ENCODE measurements at regions of chr9 and their contacts with region 1.

Region 1: GRCh38 chr9:105694190-105694847 is at the start of gene TMEM38B:
- DNase-seq: peak; percentile 72 to 91 (median 85)
- ATAC-seq: peak; percentile 92
- H3K4me3 ChIP-seq: peak within 1 kb of the TSS; percentile 79
- H3K4me3 Mint-ChIP-seq: peak within 1 kb of the TSS; percentile 80 to 97 (median 90)
- H3K27ac ChIP-seq: peak within 1 kb of the TSS; percentile 64
- H3K27ac Mint-ChIP-seq: peak within 1 kb of the TSS; percentile 44 to 88 (median 70)
- H3K4me1 ChIP-seq: peaks cover 7 to 10% of the 10 kb centered on the region in 2 donors
- H3K4me1 Mint-ChIP-seq: peaks cover 13 to 49% (median 40%) of the 10 kb centered on the region in 7 donors
- H3K27me3 ChIP-seq: peaks cover 0 to 3% of the 10 kb centered on the region in 2 donors
- H3K27me3 Mint-ChIP-seq: peaks cover 13 to 31% (median 26%) of the 10 kb centered on the region in 5 donors
- total RNA-seq, gene TMEM38B: 5.8 to 21.0 (median 15.2) TPM

Region 2: DNA sequence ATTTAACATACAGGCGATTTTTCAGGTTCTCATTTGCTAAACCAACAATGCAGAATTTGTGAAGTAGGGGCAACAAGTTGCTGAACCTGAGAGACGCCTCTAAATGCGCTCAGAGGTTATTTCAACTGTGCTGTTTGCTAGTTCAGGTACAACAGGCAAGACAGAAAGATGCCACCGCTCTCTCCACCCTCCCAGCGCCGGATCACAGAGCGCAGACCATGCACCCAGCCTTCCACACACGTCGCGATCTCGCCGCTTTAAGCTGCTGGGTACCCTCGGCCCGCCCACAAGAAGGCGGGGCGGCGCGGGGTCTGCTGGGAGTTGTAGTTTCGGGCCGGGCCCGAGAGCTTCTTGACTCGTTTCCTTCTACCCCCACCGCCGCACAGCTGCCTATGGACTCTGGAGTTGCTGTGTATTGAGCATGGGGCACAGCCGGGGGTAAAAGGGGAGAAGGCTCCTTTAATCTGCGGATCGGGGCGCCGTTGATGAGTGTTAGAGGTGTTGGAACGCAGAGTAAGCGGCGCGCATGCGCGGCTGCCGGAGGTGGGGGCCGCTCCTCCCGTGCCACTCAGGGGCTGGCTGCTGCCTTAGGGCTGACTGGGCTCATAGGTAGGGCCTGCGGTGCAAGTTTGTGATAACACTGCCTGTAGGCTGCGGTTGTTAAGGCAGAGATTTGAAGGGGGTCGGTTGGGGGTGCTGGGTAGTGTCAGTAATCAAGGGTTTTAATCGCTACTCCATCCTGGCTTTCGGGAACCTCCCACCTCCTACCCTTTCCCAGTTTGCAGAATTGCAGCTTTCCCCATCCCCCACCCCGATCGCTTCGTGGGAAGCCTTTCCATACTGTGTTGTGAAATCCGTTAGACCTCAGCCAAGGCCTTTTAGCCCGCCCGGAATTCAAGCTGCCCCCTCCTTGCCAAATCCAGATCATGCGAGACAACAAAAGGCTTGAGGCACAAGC is 726.0 kb before region 1 on chr9:
- CTCF ChIA-PET with region 1: no interaction called
- POLR2A ChIA-PET with region 1: no interaction called
- intact Hi-C with region 1: loop called (anchors 5 to 10 kb)
- DNase-seq: peak; percentile 80 to 95 (median 91)
- ATAC-seq: peak; percentile 99
- H3K4me3 ChIP-seq: peak overlapping the region; percentile 85
- H3K4me3 Mint-ChIP-seq: peak overlapping the region; percentile 82 to 96 (median 94)
- H3K27ac ChIP-seq: peak overlapping the region; percentile 69
- H3K27ac Mint-ChIP-seq: peak overlapping the region; percentile 64 to 92 (median 86)
- H3K4me1 ChIP-seq: peaks cover 0 to 6% of the 10 kb centered on the region in 2 donors
- H3K4me1 Mint-ChIP-seq: peaks cover 12 to 25% (median 17%) of the 10 kb centered on the region in 7 donors
- H3K27me3 ChIP-seq: peaks cover 0 to 4% of the 10 kb centered on the region in 2 donors
- H3K27me3 Mint-ChIP-seq: peaks cover 0 to 30% (median 0%) of the 10 kb centered on the region in 5 donors

Region 3: DNA sequence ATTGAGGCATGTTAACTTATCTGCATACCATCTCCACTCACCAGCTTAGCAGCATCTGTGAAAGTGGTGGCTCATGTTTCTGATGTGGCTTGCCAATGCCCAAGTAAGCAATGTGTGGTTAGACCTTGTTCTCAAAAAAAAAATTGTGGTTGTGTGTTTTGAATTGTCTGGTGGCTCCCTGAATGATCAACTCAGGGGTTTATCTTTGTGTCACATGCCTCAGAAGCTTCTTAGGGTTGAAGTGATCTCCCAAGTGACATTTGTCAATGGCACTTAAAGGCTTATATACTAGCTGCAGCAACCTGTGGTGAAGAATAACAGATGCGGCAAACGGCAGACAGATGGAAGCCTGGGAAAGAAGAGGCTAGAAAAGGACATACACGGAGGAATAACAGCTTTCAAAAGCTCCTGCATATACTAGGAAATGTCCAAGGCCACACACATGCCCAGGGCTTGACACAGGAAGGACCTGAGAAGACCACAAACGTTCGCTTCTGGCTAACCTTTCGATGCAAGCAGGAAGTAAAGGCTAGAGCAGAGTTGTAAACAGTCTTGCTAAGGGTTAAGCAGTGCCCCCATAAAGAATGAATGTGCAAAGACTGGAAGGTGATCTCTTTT is 288.7 kb before region 1 on chr9:
- CTCF ChIA-PET with region 1: no interaction called
- POLR2A ChIA-PET with region 1: no interaction called
- intact Hi-C with region 1: loop called in 1 of 2 experiments (anchors 10 kb)
- DNase-seq: peak in 8 of 9 donors; percentile 61 to 92 (median 90)
- ATAC-seq: peak; percentile 94
- H3K4me3 ChIP-seq: peak overlapping the region; percentile 1
- H3K4me3 Mint-ChIP-seq: peak overlapping the region in 9 of 10 donors; percentile 63 to 84 (median 75)
- H3K27ac ChIP-seq: no peak overlapping the region
- H3K27ac Mint-ChIP-seq: peak overlapping the region in 8 of 9 donors; percentile 11 to 96 (median 90)
- H3K4me1 ChIP-seq: peaks cover 19 to 22% of the 10 kb centered on the region in 2 donors
- H3K4me1 Mint-ChIP-seq: peaks cover 20 to 42% (median 34%) of the 10 kb centered on the region in 7 donors
- H3K27me3 ChIP-seq: peaks cover 0 to 6% of the 10 kb centered on the region in 2 donors
- H3K27me3 Mint-ChIP-seq: peaks cover 34 to 82% (median 59%) of the 10 kb centered on the region in 5 donors

Region 4: GRCh38 chr9:105672711-105673234 is 21.5 kb before region 1 on chr9:
- CTCF ChIA-PET with region 1: no interaction called
- POLR2A ChIA-PET with region 1: no interaction called
- intact Hi-C with region 1: loop called in 1 of 2 experiments (anchors 1 kb)
- DNase-seq: no peak
- ATAC-seq: no peak
- H3K4me3 ChIP-seq: no peak overlapping the region
- H3K4me3 Mint-ChIP-seq: no peak overlapping the region
- H3K27ac ChIP-seq: no peak overlapping the region
- H3K27ac Mint-ChIP-seq: no peak overlapping the region
- H3K4me1 ChIP-seq: no peaks in the 10 kb centered on the region
- H3K4me1 Mint-ChIP-seq: peaks cover 0 to 6% (median 0%) of the 10 kb centered on the region in 7 donors
- H3K27me3 ChIP-seq: no peaks in the 10 kb centered on the region
- H3K27me3 Mint-ChIP-seq: peaks cover 1 to 10% (median 4%) of the 10 kb centered on the region in 5 donors

Region 5: DNA sequence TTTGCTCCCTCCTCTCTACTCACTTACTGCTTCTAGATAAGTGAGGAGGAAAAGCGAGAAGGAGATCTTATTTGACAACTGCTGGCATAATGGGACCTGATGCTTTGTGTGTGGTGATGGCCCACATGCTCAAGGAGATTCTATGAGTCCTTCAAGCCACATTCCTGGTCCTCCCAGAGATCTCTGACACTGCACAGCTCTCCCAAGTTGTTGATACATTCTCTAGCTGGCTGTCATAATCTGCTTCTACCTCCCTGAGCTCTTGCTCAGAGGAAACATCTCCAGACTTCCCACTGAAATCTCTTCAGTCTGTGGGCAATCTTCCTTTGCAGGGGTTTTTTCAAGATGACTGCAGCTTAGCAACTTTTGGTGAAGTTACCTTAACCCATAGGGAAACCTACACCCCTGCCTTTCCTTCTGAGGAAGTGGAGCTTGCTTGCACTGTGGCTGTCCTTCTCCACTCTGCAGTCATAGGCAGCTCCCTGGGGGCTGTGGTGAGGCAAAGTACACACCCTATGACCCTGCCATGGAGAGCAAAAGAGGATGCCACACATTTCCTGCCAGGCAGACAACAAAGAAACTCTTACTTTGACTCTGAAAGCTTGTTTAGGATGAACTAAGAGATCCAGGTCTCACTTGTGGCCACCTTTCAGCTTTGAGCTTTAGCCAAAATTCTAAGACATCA is 163.8 kb after region 1 on chr9:
- CTCF ChIA-PET with region 1: no interaction called
- POLR2A ChIA-PET with region 1: no interaction called
- intact Hi-C with region 1: loop called in 1 of 2 experiments (anchors 2 kb)
- DNase-seq: peak in 6 of 9 donors; percentile 8 to 52 (median 26)
- ATAC-seq: peak; percentile 64
- H3K4me3 ChIP-seq: no peak overlapping the region
- H3K4me3 Mint-ChIP-seq: peak overlapping the region in 9 of 10 donors; percentile 4 to 80 (median 18)
- H3K27ac ChIP-seq: no peak overlapping the region
- H3K27ac Mint-ChIP-seq: peak overlapping the region; percentile 6 to 82 (median 58)
- H3K4me1 ChIP-seq: peaks cover 0 to 21% of the 10 kb centered on the region in 2 donors
- H3K4me1 Mint-ChIP-seq: peaks cover 23 to 34% (median 33%) of the 10 kb centered on the region in 7 donors
- H3K27me3 ChIP-seq: no peaks in the 10 kb centered on the region
- H3K27me3 Mint-ChIP-seq: peaks cover 0 to 13% (median 0%) of the 10 kb centered on the region in 5 donors